MCF 10A (cell line): ENCODE measurements at regions of chr1 and their contacts with region 1.

Region 1: DNA sequence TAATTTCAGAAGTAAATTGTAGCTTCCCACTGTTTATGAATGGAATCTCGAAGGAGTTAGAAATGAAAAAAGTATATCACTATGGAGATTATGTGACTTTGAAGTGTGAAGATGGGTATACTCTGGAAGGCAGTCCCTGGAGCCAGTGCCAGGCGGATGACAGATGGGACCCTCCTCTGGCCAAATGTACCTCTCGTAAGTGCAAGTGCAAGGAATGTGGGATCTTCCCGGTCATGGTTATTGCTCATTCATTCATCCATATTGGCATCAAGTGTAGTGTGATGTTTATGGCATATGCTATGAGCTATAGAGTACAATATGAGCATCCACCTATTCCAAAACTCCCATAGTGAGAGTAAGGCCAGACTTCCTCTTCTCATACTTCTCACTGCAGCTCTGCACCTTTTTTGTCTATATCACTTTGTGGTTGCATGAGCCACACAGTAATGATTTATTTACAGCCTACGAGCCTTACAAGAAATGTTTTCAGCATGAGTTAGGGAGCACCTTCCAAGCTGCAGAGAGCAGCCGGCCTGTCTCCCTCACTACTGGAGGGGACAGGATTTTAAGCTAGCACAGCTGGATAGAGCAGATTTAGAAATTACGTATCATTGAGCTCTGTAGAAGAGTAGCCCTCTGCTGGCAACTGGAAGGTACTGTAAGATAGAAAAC is 24.9 kb upstream of the CR1L start:
- DNase-seq: peak; percentile 73
- H3K4me3 Mint-ChIP-seq: no peak overlapping the region
- H3K27ac Mint-ChIP-seq: no peak overlapping the region
- H3K4me1 Mint-ChIP-seq: no peaks in the 10 kb centered on the region
- H3K27me3 Mint-ChIP-seq: peaks cover 27% of the 10 kb centered on the region
- CTCF ChIP-seq: peak; percentile 75

Region 2: GRCh38 chr1:207579436-207579799 is 40.6 kb before region 1 on chr1:
- CTCF ChIA-PET with region 1: interaction called, 87 read pairs
- POLR2A ChIA-PET with region 1: interaction called, 9 read pairs
- intact Hi-C with region 1: loop called (anchors 1 kb)
- DNase-seq: peak; percentile 83
- H3K4me3 Mint-ChIP-seq: no peak overlapping the region
- H3K27ac Mint-ChIP-seq: no peak overlapping the region
- H3K4me1 Mint-ChIP-seq: no peaks in the 10 kb centered on the region
- H3K27me3 Mint-ChIP-seq: peaks cover 25% of the 10 kb centered on the region
- CTCF ChIP-seq: peak; percentile 74

Region 3: GRCh38 chr1:207644852-207645634 is 25.0 kb after region 1 on chr1 and contains the start of gene CR1L:
- CTCF ChIA-PET with region 1: interaction called, 16 read pairs
- POLR2A ChIA-PET with region 1: interaction called, 4 read pairs
- intact Hi-C with region 1: no loop called
- DNase-seq: peak; percentile 39
- H3K4me3 Mint-ChIP-seq: peak within 1 kb of the TSS; percentile 13
- H3K27ac Mint-ChIP-seq: no peak within 1 kb of the TSS
- H3K4me1 Mint-ChIP-seq: peaks cover 7% of the 10 kb centered on the region
- H3K27me3 Mint-ChIP-seq: no peaks in the 10 kb centered on the region
- CTCF ChIP-seq: no peak
- total RNA-seq, gene CR1L: not detected in 2 replicates

Region 4: GRCh38 chr1:207659545-207660183 is 39.7 kb after region 1 on chr1:
- CTCF ChIA-PET with region 1: interaction called, 11 read pairs
- POLR2A ChIA-PET with region 1: interaction called, 5 read pairs
- intact Hi-C with region 1: no loop called
- DNase-seq: peak; percentile 64
- H3K4me3 Mint-ChIP-seq: no peak overlapping the region
- H3K27ac Mint-ChIP-seq: no peak overlapping the region
- H3K4me1 Mint-ChIP-seq: no peaks in the 10 kb centered on the region
- H3K27me3 Mint-ChIP-seq: peaks cover 29% of the 10 kb centered on the region
- CTCF ChIP-seq: no peak

Region 5: DNA sequence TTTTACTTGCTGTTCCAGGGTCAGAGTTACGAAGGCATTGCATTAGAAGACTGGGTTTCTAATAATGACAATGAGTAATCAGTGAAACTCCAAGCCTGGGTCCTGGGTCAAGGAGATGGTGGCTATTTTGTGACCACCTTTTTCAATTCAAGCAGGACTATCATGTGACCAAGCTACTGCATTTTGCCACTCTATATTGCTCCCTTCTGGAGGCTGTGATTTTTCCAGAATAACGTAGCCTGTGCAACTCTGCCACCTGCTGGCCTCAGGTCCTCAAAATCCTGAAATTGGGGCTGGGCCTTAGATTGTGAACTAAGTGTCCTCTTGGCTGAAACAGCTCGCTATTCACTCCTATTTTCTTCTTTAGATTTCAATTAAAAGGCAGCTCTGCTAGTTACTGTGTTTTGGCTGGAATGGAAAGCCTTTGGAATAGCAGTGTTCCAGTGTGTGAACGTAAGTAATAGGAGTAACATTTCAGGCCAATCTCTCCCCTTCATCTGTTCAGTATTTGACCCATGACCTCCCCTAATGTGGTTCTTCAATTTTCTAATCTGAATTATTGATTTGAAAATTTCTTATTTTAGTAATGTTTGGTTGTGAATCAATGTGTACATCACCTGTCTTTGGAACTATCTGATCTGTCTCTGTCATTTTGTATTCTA is 78.9 kb after region 1 on chr1:
- CTCF ChIA-PET with region 1: interaction called, 19 read pairs
- POLR2A ChIA-PET with region 1: interaction called, 3 read pairs
- intact Hi-C with region 1: no loop called
- DNase-seq: peak; percentile 86
- H3K4me3 Mint-ChIP-seq: no peak overlapping the region
- H3K27ac Mint-ChIP-seq: no peak overlapping the region
- H3K4me1 Mint-ChIP-seq: peaks cover 10% of the 10 kb centered on the region
- H3K27me3 Mint-ChIP-seq: no peaks in the 10 kb centered on the region
- CTCF ChIP-seq: peak; percentile 97

Region 6: GRCh38 chr1:207848234-207848633 is 228.2 kb after region 1 on chr1:
- CTCF ChIA-PET with region 1: no interaction called
- POLR2A ChIA-PET with region 1: no interaction called
- intact Hi-C with region 1: no loop called
- DNase-seq: peak; percentile 94
- H3K4me3 Mint-ChIP-seq: peak overlapping the region; percentile 62
- H3K27ac Mint-ChIP-seq: peak overlapping the region; percentile 94
- H3K4me1 Mint-ChIP-seq: peaks cover 73% of the 10 kb centered on the region
- H3K27me3 Mint-ChIP-seq: no peaks in the 10 kb centered on the region
- CTCF ChIP-seq: no peak

Region 7: DNA sequence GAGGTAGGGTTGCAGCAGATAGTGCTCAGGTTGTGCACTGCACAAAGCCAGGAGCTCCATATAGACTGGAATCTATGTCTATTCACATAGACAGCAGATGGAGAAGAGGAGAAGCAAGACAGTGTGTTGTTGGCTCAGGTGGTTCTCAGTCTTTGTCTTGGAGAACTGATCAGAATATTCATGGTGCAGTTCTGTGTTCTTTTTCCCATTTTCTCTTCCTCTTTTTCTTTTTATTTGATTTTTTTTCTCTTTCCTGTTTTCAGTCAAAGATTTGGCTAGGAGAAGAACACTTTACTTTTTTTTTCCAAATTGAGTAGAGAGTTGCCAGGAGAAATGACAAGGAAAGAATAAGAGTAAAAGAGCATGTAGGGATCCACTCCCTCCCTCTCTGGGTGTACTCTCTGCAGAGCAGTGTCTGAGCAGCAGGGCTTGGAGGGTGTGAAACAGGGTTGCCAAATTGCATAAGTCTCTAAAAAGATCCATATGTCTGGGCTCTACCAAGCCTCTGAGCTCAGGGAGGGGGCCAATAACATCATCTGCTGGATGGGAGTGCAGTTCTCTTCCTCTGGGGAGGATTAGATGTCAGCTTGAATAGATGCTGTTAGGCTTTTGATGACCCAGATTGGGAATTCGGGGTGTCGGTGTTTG is 299.6 kb after region 1 on chr1:
- CTCF ChIA-PET with region 1: no interaction called
- POLR2A ChIA-PET with region 1: no interaction called
- intact Hi-C with region 1: no loop called
- DNase-seq: no peak
- H3K4me3 Mint-ChIP-seq: no peak overlapping the region
- H3K27ac Mint-ChIP-seq: no peak overlapping the region
- H3K4me1 Mint-ChIP-seq: no peaks in the 10 kb centered on the region
- H3K27me3 Mint-ChIP-seq: peaks cover 13% of the 10 kb centered on the region
- CTCF ChIP-seq: no peak